ENCODE measurements at regions of chr1 and their contacts with region 1.

Region 1: DNA sequence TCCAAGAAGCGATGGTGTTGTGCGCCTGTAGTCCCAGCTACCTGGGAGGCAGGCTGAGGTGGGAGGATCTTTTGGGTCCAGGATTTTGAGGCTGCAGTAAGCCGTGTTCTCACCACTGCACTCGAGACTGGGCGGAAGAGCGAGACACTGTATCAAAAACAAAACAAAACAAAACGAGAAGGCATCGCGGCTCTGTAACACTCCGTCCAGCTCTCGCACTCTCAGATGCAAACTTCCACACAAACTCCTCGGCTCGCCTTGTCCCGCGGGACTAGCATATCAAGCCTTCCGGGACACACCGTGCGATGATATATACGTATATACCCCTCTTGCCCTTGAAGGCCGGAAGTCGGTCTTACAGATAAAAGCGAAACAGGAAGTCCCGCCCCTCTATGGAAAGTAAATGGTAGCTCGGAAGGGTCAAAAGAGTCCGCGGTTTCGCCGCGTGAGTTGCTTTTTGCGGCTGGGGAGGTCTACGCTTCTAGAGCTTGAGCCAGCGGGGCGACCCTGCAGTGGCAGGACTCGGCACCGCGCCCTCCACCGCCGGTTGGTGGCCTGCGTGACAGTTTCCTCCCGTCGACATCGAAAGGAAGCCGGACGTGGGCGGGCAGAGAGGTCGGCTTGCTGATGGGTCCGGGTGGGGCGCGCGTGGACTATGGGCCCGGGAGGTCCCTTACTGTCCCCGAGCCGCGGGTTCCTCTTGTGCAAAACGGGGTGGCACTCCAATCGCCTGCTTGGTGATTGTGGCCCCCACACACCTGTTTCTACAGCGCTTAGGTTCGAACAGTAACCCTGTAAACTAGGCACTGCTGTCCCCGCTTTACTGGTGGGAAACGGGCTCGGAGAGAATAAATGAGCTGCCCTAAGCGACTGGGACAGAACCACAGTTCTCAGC is at the start of gene COA6:
- DNase-seq: peak; percentile 88
- ATAC-seq: peak; percentile 86
- H3K4me3 Mint-ChIP-seq: peak within 1 kb of the TSS; percentile 99
- H3K27ac Mint-ChIP-seq: peak within 1 kb of the TSS; percentile 99
- H3K4me1 Mint-ChIP-seq: peaks cover 30% of the 10 kb centered on the region
- H3K27me3 Mint-ChIP-seq: no peaks in the 10 kb centered on the region
- CTCF ChIP-seq: no peak
- total RNA-seq, gene COA6: 20.7 and 24.0 TPM in 2 replicates

Region 2: GRCh38 chr1:234302354-234302962 is 70.9 kb before region 1 on chr1:
- CTCF ChIA-PET with region 1: no interaction called
- POLR2A ChIA-PET with region 1: no interaction called
- intact Hi-C with region 1: no loop called
- DNase-seq: no peak
- ATAC-seq: no peak
- H3K4me3 Mint-ChIP-seq: no peak overlapping the region
- H3K27ac Mint-ChIP-seq: no peak overlapping the region
- H3K4me1 Mint-ChIP-seq: no peaks in the 10 kb centered on the region
- H3K27me3 Mint-ChIP-seq: peaks cover 18% of the 10 kb centered on the region
- CTCF ChIP-seq: no peak

Region 3: DNA sequence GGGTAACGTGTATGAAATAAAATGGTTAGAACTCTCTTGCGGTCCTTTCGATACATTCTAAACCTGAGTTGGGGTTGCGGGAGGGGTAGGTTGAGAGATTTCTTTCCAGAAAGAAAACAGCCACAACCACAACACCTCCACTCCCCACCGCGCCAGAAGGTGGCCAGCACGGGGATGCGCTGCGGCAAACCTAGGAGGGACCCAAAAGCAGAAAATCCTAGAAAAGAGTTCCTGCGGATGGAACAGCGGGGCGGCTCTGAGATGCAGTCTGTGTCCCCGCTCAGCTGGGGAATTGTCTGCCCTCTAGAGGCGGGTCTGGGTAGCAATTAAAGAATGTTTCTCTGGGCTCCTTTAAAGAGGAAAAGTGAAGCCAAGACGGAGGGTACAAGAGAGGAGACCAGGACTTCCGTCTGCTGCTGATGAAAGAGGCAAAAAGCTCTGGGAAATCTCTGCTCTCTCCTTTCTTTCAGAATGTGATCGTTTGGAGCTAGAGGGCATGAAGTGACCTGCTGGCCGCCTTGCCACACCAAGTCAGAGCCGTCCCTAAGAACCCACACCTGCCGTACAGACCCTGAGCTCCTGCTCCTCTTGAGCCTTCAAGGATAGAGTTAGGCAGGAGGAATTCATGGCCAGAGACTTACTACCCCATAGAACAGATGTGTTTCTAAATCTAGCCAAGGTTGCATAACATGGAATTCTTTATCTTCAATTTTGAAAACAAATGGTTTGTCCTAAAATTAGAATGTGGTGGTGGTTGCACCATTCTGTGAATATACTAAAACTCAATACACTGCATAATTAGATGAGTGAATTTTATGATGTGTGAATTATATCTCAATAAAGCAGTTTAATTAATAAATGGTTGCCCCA is 46.6 kb before region 1 on chr1:
- CTCF ChIA-PET with region 1: interaction called, 7 read pairs
- POLR2A ChIA-PET with region 1: interaction called, 21 read pairs
- intact Hi-C with region 1: loop called (anchors 1 kb)
- DNase-seq: peak; percentile 35
- ATAC-seq: peak; percentile 79
- H3K4me3 Mint-ChIP-seq: peak overlapping the region; percentile 86
- H3K27ac Mint-ChIP-seq: peak overlapping the region; percentile 47
- H3K4me1 Mint-ChIP-seq: peaks cover 39% of the 10 kb centered on the region
- H3K27me3 Mint-ChIP-seq: peaks cover 13% of the 10 kb centered on the region
- CTCF ChIP-seq: peak; percentile 34

Region 4: GRCh38 chr1:234398849-234399381 is 25.6 kb after region 1 on chr1:
- CTCF ChIA-PET with region 1: no interaction called
- POLR2A ChIA-PET with region 1: interaction called, 22 read pairs
- intact Hi-C with region 1: loop called (anchors 1 kb)
- DNase-seq: no peak
- ATAC-seq: peak; percentile 78
- H3K4me3 Mint-ChIP-seq: peak overlapping the region; percentile 85
- H3K27ac Mint-ChIP-seq: peak overlapping the region; percentile 90
- H3K4me1 Mint-ChIP-seq: peaks cover 37% of the 10 kb centered on the region
- H3K27me3 Mint-ChIP-seq: no peaks in the 10 kb centered on the region
- CTCF ChIP-seq: no peak

Region 5: DNA sequence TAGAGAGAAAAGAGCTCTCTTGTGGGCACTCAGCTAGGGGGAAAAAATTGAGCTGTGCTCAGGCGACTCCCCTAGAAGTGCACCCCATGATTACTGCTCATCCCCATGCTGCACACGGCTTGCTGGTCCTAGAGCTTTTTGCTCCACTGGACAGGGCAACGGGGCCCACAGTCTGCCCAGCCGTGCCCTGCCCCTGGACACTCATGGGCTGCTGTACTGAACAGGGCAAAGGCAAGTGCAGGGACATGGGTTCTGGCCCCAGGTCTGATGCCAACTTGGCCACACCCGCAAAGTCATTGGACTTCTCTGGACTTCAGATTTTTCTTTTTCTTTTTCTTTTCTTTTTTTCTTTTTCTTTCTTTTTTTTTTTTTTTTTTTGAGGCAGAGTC is 148.5 kb after region 1 on chr1:
- CTCF ChIA-PET with region 1: no interaction called
- POLR2A ChIA-PET with region 1: no interaction called
- intact Hi-C with region 1: loop called (anchors 1 kb)
- DNase-seq: no peak
- ATAC-seq: no peak
- H3K4me3 Mint-ChIP-seq: no peak overlapping the region
- H3K27ac Mint-ChIP-seq: no peak overlapping the region
- H3K4me1 Mint-ChIP-seq: peaks cover 38% of the 10 kb centered on the region
- H3K27me3 Mint-ChIP-seq: no peaks in the 10 kb centered on the region
- CTCF ChIP-seq: no peak

Region 6: GRCh38 chr1:235128456-235129328 is 755.4 kb after region 1 on chr1 and contains the start of gene TOMM20:
- CTCF ChIA-PET with region 1: no interaction called
- POLR2A ChIA-PET with region 1: interaction called, 4 read pairs
- intact Hi-C with region 1: loop called (anchors 1 kb)
- DNase-seq: peak; percentile 91
- ATAC-seq: peak; percentile 93
- H3K4me3 Mint-ChIP-seq: peak within 1 kb of the TSS; percentile 97
- H3K27ac Mint-ChIP-seq: peak within 1 kb of the TSS; percentile 93
- H3K4me1 Mint-ChIP-seq: peaks cover 41% of the 10 kb centered on the region
- H3K27me3 Mint-ChIP-seq: no peaks in the 10 kb centered on the region
- CTCF ChIP-seq: no peak
- total RNA-seq, gene TOMM20: 80.6 and 82.7 TPM in 2 replicates

Region 7: GRCh38 chr1:235253219-235253962 is 880.1 kb after region 1 on chr1:
- CTCF ChIA-PET with region 1: no interaction called
- POLR2A ChIA-PET with region 1: interaction called, 10 read pairs
- intact Hi-C with region 1: no loop called
- DNase-seq: no peak
- ATAC-seq: peak; percentile 97
- H3K4me3 Mint-ChIP-seq: no peak overlapping the region
- H3K27ac Mint-ChIP-seq: no peak overlapping the region
- H3K4me1 Mint-ChIP-seq: peaks cover 18% of the 10 kb centered on the region
- H3K27me3 Mint-ChIP-seq: no peaks in the 10 kb centered on the region
- CTCF ChIP-seq: peak; percentile 89

Region 8: GRCh38 chr1:236281654-236282424 is 1908.5 kb after region 1 on chr1 and contains the start of gene ERO1B:
- CTCF ChIA-PET with region 1: no interaction called
- POLR2A ChIA-PET with region 1: no interaction called
- intact Hi-C with region 1: loop called (anchors 5 kb)
- DNase-seq: peak; percentile 100
- ATAC-seq: peak; percentile 91
- H3K4me3 Mint-ChIP-seq: peak within 1 kb of the TSS; percentile 97
- H3K27ac Mint-ChIP-seq: peak within 1 kb of the TSS; percentile 89
- H3K4me1 Mint-ChIP-seq: peaks cover 40% of the 10 kb centered on the region
- H3K27me3 Mint-ChIP-seq: no peaks in the 10 kb centered on the region
- CTCF ChIP-seq: no peak
- total RNA-seq, gene ERO1B: 13.2 and 17.5 TPM in 2 replicates